Esophagus muscularis mucosa (tissue), 4 donors: ENCODE measurements at regions of chr16 and their contacts with region 1.

Region 1: DNA sequence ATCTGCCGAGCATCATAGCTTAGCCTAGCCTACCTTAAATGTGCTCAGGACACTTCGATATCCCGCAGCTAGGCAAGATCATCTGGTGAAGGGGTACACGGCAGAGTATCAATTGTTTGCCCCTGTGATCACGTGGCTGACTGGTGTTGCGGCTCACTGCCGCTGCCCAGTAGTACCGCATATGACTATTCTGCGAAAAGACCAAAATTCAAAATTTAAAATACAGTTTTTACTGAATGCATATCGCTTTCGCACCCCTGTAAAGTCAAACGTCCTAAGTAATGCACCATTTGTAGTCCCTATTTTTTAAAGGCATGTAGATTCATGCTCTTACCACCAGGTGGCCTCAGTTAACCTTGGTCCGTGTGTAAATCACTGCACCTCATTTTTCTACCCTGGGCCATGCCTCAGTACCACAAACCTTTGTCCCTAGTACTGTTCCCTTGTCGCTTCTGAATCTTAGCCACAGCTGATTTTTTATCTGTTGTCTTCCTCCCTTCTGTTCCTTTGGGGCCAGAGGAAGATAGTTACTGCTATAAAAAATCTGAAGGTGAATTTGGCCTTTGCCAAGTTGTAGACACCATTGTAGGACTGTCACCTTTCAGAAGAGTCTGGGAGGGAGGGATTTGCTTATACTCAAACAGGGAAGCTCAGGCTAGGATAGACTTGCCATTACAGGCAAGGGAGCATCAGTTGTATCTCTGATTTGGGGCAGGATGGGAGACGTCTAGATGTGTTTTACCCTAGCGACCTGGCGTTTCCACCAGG is 34.4 kb downstream of the WWP2 start:
- DNase-seq: no peak
- H3K4me3 ChIP-seq: peak overlapping the region; percentile 20 to 40 (median 26)
- H3K27ac ChIP-seq: no peak overlapping the region
- H3K4me1 ChIP-seq: peaks cover 8 to 22% (median 13%) of the 10 kb centered on the region in 4 donors
- H3K27me3 ChIP-seq: no peaks in the 10 kb centered on the region
- CTCF ChIP-seq: peak; percentile 92 to 95 (median 94)
- EP300 ChIP-seq: no peak
- POLR2A ChIP-seq: no peak

Region 2: DNA sequence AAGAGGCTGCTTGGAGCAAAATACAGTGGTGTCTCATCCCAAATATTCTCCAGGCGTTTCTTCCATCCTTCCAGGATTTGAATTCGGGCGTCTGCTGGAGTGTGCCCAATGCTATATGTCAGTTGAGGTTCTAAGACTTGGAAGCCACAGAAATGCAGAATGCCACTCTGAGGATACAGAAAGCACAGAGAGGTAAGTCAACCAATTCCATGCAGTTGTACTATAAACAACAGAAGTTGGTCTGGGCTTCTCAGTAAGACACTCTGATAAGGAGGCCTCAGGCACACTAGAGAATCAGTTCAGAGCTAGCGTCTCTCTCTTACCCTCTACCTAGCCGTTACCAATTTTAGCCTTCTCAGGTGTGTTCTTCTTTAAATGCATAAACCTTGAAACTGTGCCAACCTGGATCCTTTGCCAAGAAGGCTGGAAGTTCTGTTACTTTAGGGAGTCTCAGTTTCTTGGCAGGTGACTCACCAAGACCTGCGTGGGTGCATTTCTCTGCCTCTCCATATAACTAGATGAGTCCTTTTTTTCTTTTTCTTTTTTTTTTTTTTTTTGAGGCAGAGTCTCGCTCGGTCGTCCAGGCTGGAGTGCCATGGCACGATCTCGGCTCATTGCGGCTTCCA is 85.3 kb before region 1 on chr16:
- intact Hi-C with region 1: no loop called
- DNase-seq: peak; percentile 68
- H3K4me3 ChIP-seq: no peak overlapping the region
- H3K27ac ChIP-seq: peak overlapping the region in 3 of 4 donors; percentile 28 to 45 (median 43)
- H3K4me1 ChIP-seq: peaks cover 6 to 49% (median 44%) of the 10 kb centered on the region in 4 donors
- H3K27me3 ChIP-seq: no peaks in the 10 kb centered on the region
- CTCF ChIP-seq: no peak
- EP300 ChIP-seq: no peak
- POLR2A ChIP-seq: no peak

Region 3: DNA sequence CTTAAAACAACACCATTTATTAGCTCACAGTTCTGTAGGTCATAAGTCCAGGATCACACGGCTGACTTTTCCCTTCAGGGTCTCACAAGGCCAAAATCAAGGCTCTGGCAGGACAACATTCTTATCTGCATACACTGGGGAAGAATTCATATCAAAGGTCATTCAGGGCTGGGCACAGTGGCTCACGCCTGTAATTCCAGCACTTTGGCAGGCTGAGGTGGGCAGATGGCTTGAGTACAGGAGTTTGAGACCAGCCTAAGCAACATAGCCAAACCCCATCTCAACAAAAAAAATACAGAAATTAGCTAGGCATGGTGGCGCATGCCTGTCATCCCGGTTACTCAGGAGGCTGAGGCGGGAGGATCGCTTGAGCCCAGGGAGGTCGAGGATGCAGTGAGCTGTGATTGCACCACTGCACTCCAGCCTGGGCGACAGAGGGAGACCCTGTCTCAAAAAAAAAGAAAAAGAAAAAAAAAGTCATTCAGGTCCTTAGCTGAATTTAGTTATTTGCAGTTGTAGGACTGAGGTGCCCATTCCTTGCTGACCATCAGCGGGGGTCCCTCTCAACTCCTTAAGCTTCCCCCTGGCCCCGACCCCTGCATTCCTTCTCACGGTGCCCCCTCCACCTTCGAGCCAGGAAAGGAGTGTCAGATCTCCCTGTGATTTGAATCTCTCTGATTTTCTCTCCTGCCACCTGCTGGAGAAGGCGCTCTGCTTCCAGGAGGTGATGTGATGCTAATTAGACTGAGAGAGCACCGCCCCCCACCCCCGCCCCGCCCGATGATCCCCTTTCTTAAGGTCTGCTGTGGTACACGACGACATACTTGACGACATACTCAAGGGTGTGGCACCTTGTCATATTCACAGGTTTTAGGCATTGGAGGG is 62.8 kb after region 1 on chr16:
- intact Hi-C with region 1: loop called (anchors 5 kb)
- DNase-seq: no peak
- H3K4me3 ChIP-seq: no peak overlapping the region
- H3K27ac ChIP-seq: peak overlapping the region; percentile 78 to 84 (median 84)
- H3K4me1 ChIP-seq: peaks cover 35 to 53% (median 48%) of the 10 kb centered on the region in 4 donors
- H3K27me3 ChIP-seq: no peaks in the 10 kb centered on the region
- CTCF ChIP-seq: peak; percentile 40 to 56 (median 49)
- EP300 ChIP-seq: no peak
- POLR2A ChIP-seq: no peak